BJ (cell line): ENCODE measurements at regions of chr10 and their contacts with region 1.

Region 1: GRCh38 chr10:8033812-8034465 is 20.5 kb upstream of the GATA3 start:
- DNase-seq: no peak
- H3K4me3 ChIP-seq: no peak overlapping the region
- H3K27me3 ChIP-seq: peaks cover 63% of the 10 kb centered on the region
- CTCF ChIP-seq: no peak

Region 2: GRCh38 chr10:6737758-6738505 is 1296.0 kb before region 1 on chr10:
- CTCF ChIA-PET with region 1: no interaction called
- POLR2A ChIA-PET with region 1: interaction called, 16 read pairs
- DNase-seq: no peak
- H3K4me3 ChIP-seq: peak overlapping the region; percentile 8; the same call in 1 of the 2 replicates
- H3K27me3 ChIP-seq: no peaks in the 10 kb centered on the region
- CTCF ChIP-seq: no peak